ENCODE measurements at regions of chr3 and their contacts with region 1.

Region 1: GRCh38 chr3:108914774-108915641 is 38.7 kb downstream of the GUCA1C start:
- DNase-seq: peak; percentile 91
- H3K4me3 Mint-ChIP-seq: peak overlapping the region; percentile 50
- H3K27ac Mint-ChIP-seq: peak overlapping the region; percentile 45
- H3K4me1 Mint-ChIP-seq: peaks cover 14% of the 10 kb centered on the region
- H3K27me3 Mint-ChIP-seq: peaks cover 26% of the 10 kb centered on the region

Region 2: GRCh38 chr3:108489771-108490170 is 425.2 kb before region 1 on chr3:
- intact Hi-C with region 1: loop called (anchors 1 kb)
- DNase-seq: peak; percentile 81
- H3K4me3 Mint-ChIP-seq: no peak overlapping the region
- H3K27ac Mint-ChIP-seq: no peak overlapping the region
- H3K4me1 Mint-ChIP-seq: peaks cover 2% of the 10 kb centered on the region
- H3K27me3 Mint-ChIP-seq: peaks cover 13% of the 10 kb centered on the region

Region 3: DNA sequence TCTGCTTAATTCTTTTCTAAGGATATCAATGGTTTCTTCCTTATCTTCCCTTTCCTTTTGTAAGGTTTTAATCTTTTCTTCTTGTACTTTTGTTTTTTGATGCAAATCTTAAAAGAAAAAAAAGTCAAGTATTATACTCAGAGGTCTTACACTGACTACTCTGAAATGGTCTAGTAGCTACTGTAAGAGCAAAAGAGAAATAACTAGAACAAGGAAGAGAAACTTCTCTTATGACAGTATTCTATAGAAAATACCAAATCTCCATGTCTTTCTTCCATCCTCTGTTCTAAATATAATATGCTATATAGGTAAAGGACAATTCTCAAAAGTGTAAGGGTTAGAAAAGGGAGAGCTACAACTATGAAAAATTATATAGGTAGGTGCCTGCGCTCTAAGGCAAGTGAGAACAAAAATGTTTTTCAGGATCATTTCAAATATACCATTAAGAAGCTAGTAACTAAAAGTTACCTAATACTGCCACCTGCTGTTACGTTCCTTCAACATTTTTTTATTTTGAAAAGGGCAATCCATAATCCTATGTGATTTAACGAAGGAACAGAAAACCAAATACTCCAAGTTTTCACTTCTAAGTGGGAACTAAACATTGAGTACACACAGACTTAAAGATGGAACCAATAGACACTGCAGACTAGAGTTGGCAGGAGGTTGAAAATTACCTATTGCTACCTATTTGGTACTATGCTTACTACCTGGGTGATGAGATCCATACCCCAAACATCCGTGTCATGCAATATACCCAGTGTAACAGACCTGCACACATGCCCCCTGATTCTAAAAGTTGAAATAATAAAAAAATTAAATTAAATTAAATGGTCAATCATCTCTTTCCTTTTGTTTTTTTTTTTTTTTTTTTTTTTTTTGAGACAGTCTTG is 362.5 kb before region 1 on chr3:
- intact Hi-C with region 1: loop called (anchors 10 kb)
- DNase-seq: peak; percentile 68
- H3K4me3 Mint-ChIP-seq: no peak overlapping the region
- H3K27ac Mint-ChIP-seq: no peak overlapping the region
- H3K4me1 Mint-ChIP-seq: peaks cover 9% of the 10 kb centered on the region
- H3K27me3 Mint-ChIP-seq: no peaks in the 10 kb centered on the region

Region 4: GRCh38 chr3:108662130-108662738 is 252.8 kb before region 1 on chr3:
- intact Hi-C with region 1: loop called (anchors 1 kb)
- DNase-seq: peak; percentile 86
- H3K4me3 Mint-ChIP-seq: no peak overlapping the region
- H3K27ac Mint-ChIP-seq: no peak overlapping the region
- H3K4me1 Mint-ChIP-seq: peaks cover 8% of the 10 kb centered on the region
- H3K27me3 Mint-ChIP-seq: peaks cover 2% of the 10 kb centered on the region

Region 5: DNA sequence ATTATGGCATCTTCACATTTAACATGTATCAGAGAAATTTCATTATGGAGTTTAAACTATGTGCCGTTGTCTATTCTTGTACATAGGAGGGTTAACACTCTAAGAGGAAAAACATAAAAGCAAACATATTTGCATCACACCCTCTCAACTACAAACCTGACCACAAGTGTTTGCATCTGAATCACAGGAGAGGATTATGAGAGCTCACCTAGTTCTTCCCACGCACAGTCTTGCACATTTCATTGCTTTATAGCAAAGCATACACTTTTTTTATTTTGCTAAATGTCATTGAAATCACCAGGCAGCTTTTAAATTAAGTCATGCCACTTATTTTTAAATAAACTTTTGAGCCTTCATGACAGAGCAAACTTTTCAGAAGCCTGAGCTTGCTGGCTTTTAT is 79.9 kb before region 1 on chr3:
- intact Hi-C with region 1: loop called (anchors 2 kb)
- DNase-seq: peak; percentile 86
- H3K4me3 Mint-ChIP-seq: peak overlapping the region; percentile 90
- H3K27ac Mint-ChIP-seq: peak overlapping the region; percentile 98
- H3K4me1 Mint-ChIP-seq: peaks cover 70% of the 10 kb centered on the region
- H3K27me3 Mint-ChIP-seq: no peaks in the 10 kb centered on the region

Region 6: DNA sequence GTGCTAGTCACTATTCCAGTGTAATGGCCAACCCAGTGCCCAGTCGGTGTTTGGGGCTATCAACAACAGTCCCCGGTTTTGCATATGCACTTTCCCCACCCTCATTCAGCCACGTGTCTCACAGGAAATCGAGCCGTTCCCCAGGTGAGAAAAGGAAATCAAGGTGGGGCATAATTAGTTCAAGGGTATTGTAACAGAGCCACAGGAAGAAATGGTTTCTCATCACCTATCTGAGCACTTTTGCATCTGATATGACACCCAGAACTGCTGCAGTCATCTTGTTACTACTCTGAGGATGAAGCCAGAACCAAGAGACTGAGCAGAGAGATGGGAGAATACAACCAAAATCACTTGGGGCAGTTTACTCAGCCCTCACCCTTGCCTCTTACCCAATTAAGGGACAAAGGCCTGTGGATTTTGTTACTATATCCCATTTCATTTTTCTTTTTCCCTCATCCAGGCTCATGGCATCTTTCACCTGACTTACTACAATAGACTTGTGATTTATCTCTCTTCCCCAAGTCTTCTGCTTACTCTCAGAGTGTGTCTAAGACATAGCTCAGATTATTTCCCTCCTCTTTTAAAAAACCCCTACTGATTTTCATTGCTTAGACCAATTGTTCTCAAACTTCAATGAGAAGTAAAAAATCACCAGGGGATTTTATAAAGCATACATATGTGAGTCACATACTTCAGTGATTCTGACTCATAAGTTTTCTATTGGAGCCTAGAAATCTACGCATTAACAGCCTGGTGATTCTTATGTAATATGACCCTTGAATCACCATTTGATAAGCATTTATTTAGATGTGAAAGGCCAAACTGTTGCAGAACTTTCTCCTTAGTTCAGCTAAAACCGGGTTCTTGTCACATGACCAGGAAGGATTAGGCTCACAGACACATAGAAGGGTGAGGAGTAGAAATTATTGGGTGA is 51.9 kb before region 1 on chr3:
- intact Hi-C with region 1: loop called (anchors 5 kb)
- DNase-seq: peak; percentile 69
- H3K4me3 Mint-ChIP-seq: peak overlapping the region; percentile 63
- H3K27ac Mint-ChIP-seq: peak overlapping the region; percentile 99
- H3K4me1 Mint-ChIP-seq: peaks cover 42% of the 10 kb centered on the region
- H3K27me3 Mint-ChIP-seq: no peaks in the 10 kb centered on the region

Region 7: GRCh38 chr3:109081746-109082510 is 166.9 kb after region 1 on chr3:
- intact Hi-C with region 1: loop called (anchors 5 kb)
- DNase-seq: peak; percentile 76
- H3K4me3 Mint-ChIP-seq: no peak overlapping the region
- H3K27ac Mint-ChIP-seq: no peak overlapping the region
- H3K4me1 Mint-ChIP-seq: peaks cover 4% of the 10 kb centered on the region
- H3K27me3 Mint-ChIP-seq: peaks cover 43% of the 10 kb centered on the region